ENCODE measurements at regions of chr5 and their contacts with region 1.

Region 1: DNA sequence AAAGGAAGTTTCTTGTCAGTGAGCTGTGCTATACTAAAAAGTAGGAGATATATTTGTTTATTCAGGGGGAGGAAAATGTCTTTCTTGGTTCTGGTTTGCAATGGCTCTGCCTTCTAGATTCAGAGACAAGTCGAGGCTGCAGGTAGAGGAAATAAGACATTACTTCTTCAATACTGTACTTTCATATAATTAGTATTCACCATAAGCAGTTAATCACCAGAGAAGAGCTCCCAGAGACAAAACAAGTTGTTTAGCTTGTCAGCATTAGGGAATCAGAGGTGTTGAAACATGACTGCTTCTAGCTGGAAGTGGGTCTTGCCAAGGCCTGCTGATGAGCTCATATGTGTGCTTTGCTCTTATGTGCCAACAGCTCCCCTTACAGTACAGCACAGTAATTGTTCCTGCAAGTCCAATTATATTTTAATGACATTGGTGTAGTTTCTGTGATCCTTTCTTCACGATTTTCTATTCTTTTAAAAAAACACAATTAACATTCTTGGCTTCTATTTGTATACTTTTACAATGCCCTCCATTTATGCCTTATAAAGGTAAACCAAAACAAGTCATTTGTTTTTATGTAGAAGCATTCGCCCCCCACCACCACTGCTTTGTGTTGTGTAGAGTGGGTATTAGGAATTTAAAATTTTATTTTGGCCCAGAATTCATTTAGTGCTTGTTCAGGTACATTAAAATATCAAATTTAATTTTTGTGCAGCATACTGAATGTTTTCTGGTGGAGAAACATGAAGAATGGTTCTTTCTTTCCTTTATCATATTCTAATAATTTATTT is 112.2 kb downstream of the RPS23 start:
- DNase-seq: peak; percentile 58
- ATAC-seq: peak; percentile 86
- H3K4me3 ChIP-seq: no peak overlapping the region
- H3K4me3 Mint-ChIP-seq: no peak overlapping the region
- H3K27ac ChIP-seq: no peak overlapping the region
- H3K27ac Mint-ChIP-seq: no peak overlapping the region
- H3K4me1 ChIP-seq: no peaks in the 10 kb centered on the region
- H3K4me1 Mint-ChIP-seq: peaks cover 3% of the 10 kb centered on the region
- H3K27me3 ChIP-seq: no peaks in the 10 kb centered on the region
- H3K27me3 Mint-ChIP-seq: no peaks in the 10 kb centered on the region
- CTCF ChIP-seq: peak; percentile 63

Region 2: DNA sequence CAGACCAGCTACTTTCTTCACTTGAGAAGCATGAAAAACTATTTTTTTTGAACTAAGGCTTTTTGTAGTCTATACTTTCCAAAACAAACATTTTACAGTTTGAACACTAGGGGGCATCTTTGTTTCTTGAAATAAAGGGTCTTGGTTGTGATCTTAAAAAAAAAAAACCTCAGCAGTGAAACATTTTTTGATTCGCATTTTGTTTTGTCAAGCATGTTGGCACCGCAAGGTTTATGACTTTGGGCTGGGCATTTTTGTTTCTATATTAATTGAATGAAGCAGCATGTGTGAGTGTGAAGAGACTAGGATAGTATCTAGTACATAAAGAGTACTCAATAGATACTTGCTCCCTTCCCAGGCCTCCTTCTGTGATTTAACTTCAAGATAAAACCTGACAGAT is 740.4 kb before region 1 on chr5:
- CTCF ChIA-PET with region 1: interaction called, 55 read pairs
- POLR2A ChIA-PET with region 1: no interaction called
- intact Hi-C with region 1: no loop called
- DNase-seq: peak; percentile 54
- ATAC-seq: no peak
- H3K4me3 ChIP-seq: no peak overlapping the region
- H3K4me3 Mint-ChIP-seq: no peak overlapping the region
- H3K27ac ChIP-seq: no peak overlapping the region
- H3K27ac Mint-ChIP-seq: peak overlapping the region; percentile 70
- H3K4me1 ChIP-seq: no peaks in the 10 kb centered on the region
- H3K4me1 Mint-ChIP-seq: peaks cover 4% of the 10 kb centered on the region
- H3K27me3 ChIP-seq: no peaks in the 10 kb centered on the region
- H3K27me3 Mint-ChIP-seq: no peaks in the 10 kb centered on the region
- CTCF ChIP-seq: peak; percentile 85

Region 3: GRCh38 chr5:81516091-81516490 is 649.8 kb before region 1 on chr5:
- CTCF ChIA-PET with region 1: interaction called, 11 read pairs
- POLR2A ChIA-PET with region 1: no interaction called
- intact Hi-C with region 1: no loop called
- DNase-seq: no peak
- ATAC-seq: no peak
- H3K4me3 ChIP-seq: no peak overlapping the region
- H3K4me3 Mint-ChIP-seq: no peak overlapping the region
- H3K27ac ChIP-seq: no peak overlapping the region
- H3K27ac Mint-ChIP-seq: no peak overlapping the region
- H3K4me1 ChIP-seq: no peaks in the 10 kb centered on the region
- H3K4me1 Mint-ChIP-seq: peaks cover 3% of the 10 kb centered on the region
- H3K27me3 ChIP-seq: no peaks in the 10 kb centered on the region
- H3K27me3 Mint-ChIP-seq: no peaks in the 10 kb centered on the region
- CTCF ChIP-seq: no peak

Region 4: DNA sequence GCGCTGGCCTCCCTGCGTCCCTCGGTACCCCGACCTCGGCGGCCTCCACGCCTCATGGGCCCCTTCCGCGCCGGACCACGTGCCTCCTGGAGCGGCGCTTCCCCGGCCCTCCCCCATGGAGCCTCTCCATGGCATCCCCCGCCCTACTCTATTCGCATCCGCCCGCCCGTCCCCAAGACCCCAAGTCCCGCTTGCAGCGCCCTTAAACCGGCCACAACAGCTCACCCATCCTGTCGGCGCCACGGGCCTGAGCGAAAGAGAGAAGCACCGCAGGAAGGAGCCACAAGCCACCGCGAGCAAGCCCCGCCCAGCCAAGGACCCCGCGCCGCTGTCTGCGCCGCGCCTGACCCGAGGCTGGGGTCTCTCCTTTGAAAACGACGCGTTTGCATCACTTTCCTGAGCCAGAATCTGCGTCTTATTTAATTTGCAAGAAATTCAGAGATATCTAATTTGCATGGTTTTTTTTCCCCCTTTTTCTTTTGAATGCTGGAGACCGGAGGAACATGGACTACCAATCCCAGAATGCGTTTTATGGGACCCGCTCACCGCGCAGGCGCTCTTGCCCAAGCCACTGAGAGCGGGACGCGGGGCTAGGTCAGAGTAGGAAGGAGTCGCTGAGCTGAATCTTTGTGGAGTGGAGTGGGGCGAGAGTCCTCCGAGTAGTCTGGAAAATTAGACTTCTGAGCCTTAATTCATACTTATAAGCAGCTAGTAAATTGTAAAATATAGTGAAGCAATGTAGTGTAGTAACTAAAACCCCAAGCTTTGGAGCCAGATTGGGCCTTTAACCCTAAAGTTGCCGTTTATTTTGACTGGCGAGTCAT is 112.4 kb after region 1 on chr5 and contains the start of gene RPS23:
- CTCF ChIA-PET with region 1: interaction called, 3 read pairs
- POLR2A ChIA-PET with region 1: no interaction called
- intact Hi-C with region 1: loop called (anchors 5 kb)
- DNase-seq: peak; percentile 93
- ATAC-seq: peak; percentile 95
- H3K4me3 ChIP-seq: peak within 1 kb of the TSS; percentile 80 to 98 (median 90)
- H3K4me3 Mint-ChIP-seq: peak within 1 kb of the TSS; percentile 91
- H3K27ac ChIP-seq: peak within 1 kb of the TSS; percentile 82 to 89
- H3K27ac Mint-ChIP-seq: peak within 1 kb of the TSS; percentile 94
- H3K4me1 ChIP-seq: peaks cover 26 to 27% of the 10 kb centered on the region in 2 donors
- H3K4me1 Mint-ChIP-seq: peaks cover 37% of the 10 kb centered on the region
- H3K27me3 ChIP-seq: no peaks in the 10 kb centered on the region
- H3K27me3 Mint-ChIP-seq: no peaks in the 10 kb centered on the region
- CTCF ChIP-seq: no peak
- total RNA-seq, gene RPS23: 3,327 and 3,420 TPM in 2 replicates

Measured in B cell (primary cell).